ENCODE measurements at regions of chr7 and their contacts with region 1.

Region 1: DNA sequence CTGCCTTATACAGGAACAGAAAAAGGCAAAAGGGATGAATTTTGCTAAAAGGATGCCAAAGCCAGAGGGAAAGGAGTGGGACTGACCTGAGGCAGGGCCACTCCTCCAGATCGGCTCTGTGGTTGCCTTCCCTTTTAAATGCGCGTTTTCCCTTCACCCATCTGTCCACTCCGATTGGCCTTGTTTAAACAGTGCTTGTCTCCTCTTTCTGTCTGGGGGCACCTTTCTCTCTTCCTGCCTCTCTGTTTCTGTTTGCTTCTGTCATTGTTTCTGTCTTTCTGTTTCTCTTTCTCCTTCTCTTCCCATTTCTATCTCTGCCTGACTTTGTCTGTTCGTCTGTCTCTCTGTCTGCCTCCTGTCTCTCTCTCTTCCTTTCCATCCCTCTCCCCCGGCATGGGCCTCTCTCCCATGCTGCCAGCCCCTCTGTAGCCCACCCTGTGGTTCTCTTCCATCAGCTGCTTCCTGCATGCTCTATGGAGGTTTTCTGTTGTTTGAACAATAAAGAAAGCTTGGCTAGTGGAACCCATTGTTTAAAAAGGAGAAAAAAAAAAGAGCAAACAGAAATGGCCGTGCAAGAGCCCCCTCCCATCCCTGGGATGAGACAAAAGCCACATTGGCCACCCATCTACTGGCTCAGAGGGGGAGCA is 29.5 kb upstream of the HSPB1 start:
- DNase-seq: no peak
- H3K4me3 ChIP-seq: no peak overlapping the region
- H3K27ac ChIP-seq: no peak overlapping the region
- H3K4me1 ChIP-seq: no peaks in the 10 kb centered on the region
- H3K27me3 ChIP-seq: peaks cover 2% of the 10 kb centered on the region
- CTCF ChIP-seq: no peak

Region 2: GRCh38 chr7:76191783-76192275 is 81.1 kb before region 1 on chr7:
- CTCF ChIA-PET with region 1: no interaction called
- dilution Hi-C with region 1: loop called (anchors 5 kb)
- in situ Hi-C with region 1: no loop called
- intact Hi-C with region 1: no loop called
- DNase-seq: peak; percentile 32
- H3K4me3 ChIP-seq: no peak overlapping the region
- H3K27ac ChIP-seq: no peak overlapping the region
- H3K4me1 ChIP-seq: no peaks in the 10 kb centered on the region
- H3K27me3 ChIP-seq: no peaks in the 10 kb centered on the region
- CTCF ChIP-seq: no peak

Region 3: GRCh38 chr7:76515999-76516443 is 243.0 kb after region 1 on chr7:
- CTCF ChIA-PET with region 1: no interaction called
- dilution Hi-C with region 1: no loop called
- in situ Hi-C with region 1: no loop called
- intact Hi-C with region 1: no loop called
- DNase-seq: no peak
- H3K4me3 ChIP-seq: no peak overlapping the region
- H3K27ac ChIP-seq: no peak overlapping the region
- H3K4me1 ChIP-seq: peaks cover 11% of the 10 kb centered on the region
- H3K27me3 ChIP-seq: no peaks in the 10 kb centered on the region
- CTCF ChIP-seq: peak; percentile 88 to 95